Esophagus squamous epithelium (tissue), 5 donors: ENCODE measurements at regions of chr16 and their contacts with region 1.

Region 1: GRCh38 chr16:21194771-21195301 is 16.5 kb downstream of the ZP2 start:
- DNase-seq: no peak
- H3K4me3 ChIP-seq: no peak overlapping the region
- H3K27ac ChIP-seq: no peak overlapping the region
- H3K4me1 ChIP-seq: no peaks in the 10 kb centered on the region
- H3K27me3 ChIP-seq: peaks cover 0 to 29% (median 0%) of the 10 kb centered on the region in 4 donors
- CTCF ChIP-seq: no peak
- POLR2A ChIP-seq: no peak

Region 2: DNA sequence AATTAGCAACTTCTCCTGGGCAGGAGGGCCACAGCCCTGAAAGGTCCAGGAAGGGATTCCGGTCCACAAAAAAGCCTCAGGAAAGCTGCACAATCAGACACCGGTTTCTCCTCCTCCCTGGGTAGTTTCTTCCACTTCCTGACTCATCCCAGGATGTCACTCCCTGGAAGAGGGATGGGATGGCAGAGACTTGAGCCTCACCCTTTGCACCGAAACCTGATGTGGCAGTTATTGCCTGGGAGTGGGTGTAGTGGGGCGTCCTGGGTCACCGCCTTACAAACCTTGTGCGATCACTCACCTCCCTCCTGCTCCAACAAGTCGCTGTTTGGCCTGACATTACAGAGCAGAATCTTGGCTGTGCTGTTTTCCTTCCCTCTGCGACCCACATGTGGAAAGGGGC is 223.4 kb before region 1 on chr16:
- intact Hi-C with region 1: no loop called
- DNase-seq: no peak
- H3K4me3 ChIP-seq: no peak overlapping the region
- H3K27ac ChIP-seq: peak overlapping the region in 3 of 4 donors; percentile 43 to 66 (median 53)
- H3K4me1 ChIP-seq: peaks cover 0 to 12% (median 0%) of the 10 kb centered on the region in 3 donors
- H3K27me3 ChIP-seq: no peaks in the 10 kb centered on the region
- CTCF ChIP-seq: no peak
- POLR2A ChIP-seq: no peak

Region 3: GRCh38 chr16:21277927-21278706 is 83.3 kb after region 1 on chr16 and contains the start of gene CRYM:
- intact Hi-C with region 1: loop called (anchors 10 kb)
- DNase-seq: no peak
- H3K4me3 ChIP-seq: peak within 1 kb of the TSS; percentile 3 to 65 (median 46)
- H3K27ac ChIP-seq: peak within 1 kb of the TSS in 1 of 4 donors; percentile 0
- H3K4me1 ChIP-seq: peaks cover 6 to 13% (median 6%) of the 10 kb centered on the region in 3 donors
- H3K27me3 ChIP-seq: peaks cover 0 to 80% (median 0%) of the 10 kb centered on the region in 4 donors
- CTCF ChIP-seq: peak; percentile 44 to 77 (median 62)
- POLR2A ChIP-seq: no peak
- total RNA-seq, gene CRYM: 2.0 to 13.9 (median 5.8) TPM

Region 4: GRCh38 chr16:21338537-21339268 is 143.9 kb after region 1 on chr16:
- intact Hi-C with region 1: no loop called
- DNase-seq: no peak
- H3K4me3 ChIP-seq: no peak overlapping the region
- H3K27ac ChIP-seq: no peak overlapping the region
- H3K4me1 ChIP-seq: no peaks in the 10 kb centered on the region
- H3K27me3 ChIP-seq: no peaks in the 10 kb centered on the region
- CTCF ChIP-seq: no peak
- POLR2A ChIP-seq: no peak